ENCODE measurements at regions of chr9 and their contacts with region 1.

Region 1: DNA sequence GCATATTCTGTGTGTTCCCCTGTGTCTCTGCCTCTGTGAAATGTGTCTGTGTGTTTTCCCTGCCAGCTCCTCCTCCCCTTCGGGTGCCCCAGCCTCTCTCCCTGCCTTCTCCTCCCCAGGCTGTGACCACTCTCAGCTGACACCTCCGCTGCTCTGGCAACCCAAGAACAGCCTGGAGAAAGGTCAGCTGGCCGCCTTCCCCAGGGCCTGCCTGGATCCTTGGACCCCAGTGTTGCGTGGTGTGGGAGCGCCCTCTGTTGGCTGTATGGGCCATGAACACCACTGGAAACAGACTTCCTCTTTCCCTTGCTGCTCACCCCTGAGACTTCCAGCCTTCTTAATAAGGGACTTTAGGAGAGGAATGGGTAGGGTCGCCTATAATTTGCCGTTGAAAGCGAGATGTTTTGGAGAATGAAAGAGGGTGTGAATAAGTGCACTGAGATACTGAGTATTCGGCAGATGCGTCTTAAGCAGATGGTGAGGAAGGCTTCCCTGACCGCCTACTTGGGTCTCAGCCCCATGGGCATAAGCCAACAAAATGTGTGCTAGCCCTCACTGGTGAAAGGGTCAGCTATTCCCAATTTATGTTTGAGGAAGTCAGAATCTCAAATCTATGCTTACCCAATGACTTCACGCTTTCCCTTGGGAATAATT is 114.9 kb upstream of the TRIM32 start:
- DNase-seq: peak; percentile 76
- CTCF ChIP-seq: peak; percentile 77

Region 2: DNA sequence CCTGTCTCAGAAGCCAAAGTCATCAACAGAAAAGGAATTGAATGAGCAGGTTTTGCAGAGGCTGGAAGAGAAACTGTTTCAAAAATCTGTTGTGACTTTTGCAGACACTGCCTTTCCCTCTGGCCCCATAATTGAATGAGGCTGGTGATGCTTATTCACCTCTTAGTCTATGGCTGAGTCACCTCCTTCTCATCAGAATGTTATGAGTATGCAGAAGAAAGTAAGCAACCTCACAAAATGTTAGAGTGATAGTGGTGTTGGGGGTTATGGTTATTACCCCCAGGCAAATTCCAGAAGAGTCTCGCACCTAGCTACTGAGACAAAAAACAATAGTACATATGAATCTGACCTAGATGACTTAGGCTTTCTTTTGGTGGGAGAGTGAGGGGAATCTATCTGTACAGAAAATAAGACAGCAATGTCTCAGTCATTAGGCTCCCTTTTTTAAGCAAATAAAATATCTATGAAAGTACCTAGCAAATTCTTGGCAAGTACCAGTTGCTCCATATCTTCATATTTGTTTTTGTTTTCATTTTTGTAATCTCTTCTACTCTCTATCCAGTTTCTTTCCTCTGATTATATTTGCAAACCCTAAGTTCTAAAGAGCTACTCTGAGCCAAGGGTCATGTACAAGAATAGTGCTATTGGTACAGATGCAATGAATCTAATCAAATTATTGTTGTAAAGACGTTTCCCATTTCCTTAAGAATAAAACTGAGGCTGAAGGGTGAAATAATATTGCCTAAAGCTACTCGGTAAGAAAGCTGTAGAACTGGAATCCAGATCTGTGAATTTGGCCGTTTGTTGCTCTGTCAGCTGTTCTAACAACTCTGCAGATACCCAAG is 956.2 kb before region 1 on chr9:
- in situ Hi-C with region 1: loop called (anchors 25 kb)
- DNase-seq: no peak
- CTCF ChIP-seq: no peak

Region 3: GRCh38 chr9:116149844-116150243 is 422.4 kb before region 1 on chr9:
- in situ Hi-C with region 1: loop called (anchors 10 kb)
- DNase-seq: peak; percentile 32
- CTCF ChIP-seq: peak; percentile 20

Region 4: GRCh38 chr9:116632990-116633838 is 61.0 kb after region 1 on chr9:
- in situ Hi-C with region 1: loop called (anchors 10 kb)
- DNase-seq: no peak
- CTCF ChIP-seq: no peak

Region 5: DNA sequence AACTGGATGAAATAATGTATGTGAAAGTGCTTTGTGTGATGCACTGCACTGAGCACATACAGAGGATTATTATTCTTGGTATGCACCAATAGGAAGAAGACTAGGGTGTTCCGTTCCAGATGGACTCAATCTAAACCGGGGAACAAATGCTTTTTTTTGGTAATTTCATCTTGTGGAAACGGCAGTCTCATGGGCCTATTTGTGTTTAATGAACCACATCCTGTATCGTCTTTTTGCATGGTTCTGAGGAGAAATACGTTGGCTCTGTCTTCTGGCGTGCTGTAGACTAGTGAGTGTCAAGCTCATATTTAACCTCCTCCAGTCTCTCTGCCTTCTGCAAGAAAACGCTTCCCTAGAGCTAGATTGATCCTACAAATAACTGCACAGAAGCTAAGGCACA is 144.9 kb after region 1 on chr9:
- in situ Hi-C with region 1: no loop called
- DNase-seq: no peak
- CTCF ChIP-seq: no peak

Region 6: DNA sequence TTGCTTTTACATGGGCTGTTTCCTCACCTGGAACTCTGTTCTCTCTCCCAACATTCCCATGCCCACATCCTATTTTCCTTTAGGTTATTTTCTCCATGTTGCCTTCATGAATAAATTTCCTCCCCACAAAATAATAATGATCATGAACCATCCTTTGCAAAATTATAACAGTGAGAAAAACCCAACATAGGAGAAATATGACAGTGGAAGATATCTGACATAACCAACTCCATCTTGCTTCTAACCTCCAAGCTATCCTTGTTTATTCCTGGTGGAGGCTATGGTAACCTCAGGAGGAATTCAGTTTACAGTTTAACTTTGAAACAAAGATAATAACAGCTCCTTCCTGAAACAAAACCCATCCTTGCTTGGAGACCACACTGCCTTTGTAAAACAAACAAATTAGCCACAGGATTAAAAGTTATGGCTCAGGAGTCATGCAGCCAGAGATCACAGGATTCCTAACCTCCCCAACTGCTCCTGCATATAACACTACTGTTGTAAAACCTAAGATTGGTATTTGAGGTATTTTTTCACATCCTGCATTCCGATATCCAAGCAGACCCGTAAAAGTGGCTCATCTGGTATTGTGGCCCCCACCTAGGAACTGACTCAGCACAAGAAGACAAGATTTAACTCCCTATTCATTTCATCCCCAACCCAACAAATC is 327.2 kb after region 1 on chr9:
- in situ Hi-C with region 1: no loop called
- DNase-seq: no peak
- CTCF ChIP-seq: no peak